IMR-90 (cell line): ENCODE measurements at regions of chr4 and their contacts with region 1.

Region 1: GRCh38 chr4:56372774-56373173 is 14.5 kb downstream of the AASDH start:
- DNase-seq: peak; percentile 57
- ATAC-seq: peak; percentile 53
- H3K4me3 ChIP-seq: no peak overlapping the region
- H3K27ac ChIP-seq: no peak overlapping the region
- H3K4me1 ChIP-seq: no peaks in the 10 kb centered on the region
- H3K27me3 ChIP-seq: no peaks in the 10 kb centered on the region
- CTCF ChIP-seq: no peak
- POLR2A ChIP-seq: no peak
- RAD21 ChIP-seq: no peak

Region 2: DNA sequence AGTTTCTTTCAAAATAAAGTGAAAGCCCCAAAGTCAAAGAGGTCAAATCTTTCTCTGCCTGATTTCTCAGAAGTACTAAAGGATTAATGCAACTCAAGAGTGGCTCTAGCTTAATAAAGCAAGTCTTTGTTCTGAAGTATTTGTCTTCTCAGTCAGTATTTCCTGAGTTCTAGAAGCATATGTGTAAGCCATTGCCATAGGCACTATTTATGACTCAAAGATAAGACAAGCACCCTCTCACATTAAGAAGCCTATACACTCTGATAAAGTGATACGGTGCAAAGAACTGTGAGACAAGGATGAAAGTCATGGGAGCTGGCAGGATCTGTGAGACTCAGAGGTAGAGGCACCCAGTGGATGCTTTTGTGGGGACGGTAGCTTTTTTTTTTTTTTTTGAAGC is 46.4 kb before region 1 on chr4:
- CTCF ChIA-PET with region 1: no interaction called
- POLR2A ChIA-PET with region 1: no interaction called
- dilution Hi-C with region 1: no loop called
- in situ Hi-C with region 1: no loop called
- intact Hi-C with region 1: loop called (anchors 5 kb)
- DNase-seq: peak; percentile 3
- ATAC-seq: no peak
- H3K4me3 ChIP-seq: no peak overlapping the region
- H3K27ac ChIP-seq: no peak overlapping the region
- H3K4me1 ChIP-seq: peaks cover 1% of the 10 kb centered on the region; the same call in 1 of the 2 replicates
- H3K27me3 ChIP-seq: no peaks in the 10 kb centered on the region
- CTCF ChIP-seq: no peak
- POLR2A ChIP-seq: no peak
- RAD21 ChIP-seq: no peak

Region 3: DNA sequence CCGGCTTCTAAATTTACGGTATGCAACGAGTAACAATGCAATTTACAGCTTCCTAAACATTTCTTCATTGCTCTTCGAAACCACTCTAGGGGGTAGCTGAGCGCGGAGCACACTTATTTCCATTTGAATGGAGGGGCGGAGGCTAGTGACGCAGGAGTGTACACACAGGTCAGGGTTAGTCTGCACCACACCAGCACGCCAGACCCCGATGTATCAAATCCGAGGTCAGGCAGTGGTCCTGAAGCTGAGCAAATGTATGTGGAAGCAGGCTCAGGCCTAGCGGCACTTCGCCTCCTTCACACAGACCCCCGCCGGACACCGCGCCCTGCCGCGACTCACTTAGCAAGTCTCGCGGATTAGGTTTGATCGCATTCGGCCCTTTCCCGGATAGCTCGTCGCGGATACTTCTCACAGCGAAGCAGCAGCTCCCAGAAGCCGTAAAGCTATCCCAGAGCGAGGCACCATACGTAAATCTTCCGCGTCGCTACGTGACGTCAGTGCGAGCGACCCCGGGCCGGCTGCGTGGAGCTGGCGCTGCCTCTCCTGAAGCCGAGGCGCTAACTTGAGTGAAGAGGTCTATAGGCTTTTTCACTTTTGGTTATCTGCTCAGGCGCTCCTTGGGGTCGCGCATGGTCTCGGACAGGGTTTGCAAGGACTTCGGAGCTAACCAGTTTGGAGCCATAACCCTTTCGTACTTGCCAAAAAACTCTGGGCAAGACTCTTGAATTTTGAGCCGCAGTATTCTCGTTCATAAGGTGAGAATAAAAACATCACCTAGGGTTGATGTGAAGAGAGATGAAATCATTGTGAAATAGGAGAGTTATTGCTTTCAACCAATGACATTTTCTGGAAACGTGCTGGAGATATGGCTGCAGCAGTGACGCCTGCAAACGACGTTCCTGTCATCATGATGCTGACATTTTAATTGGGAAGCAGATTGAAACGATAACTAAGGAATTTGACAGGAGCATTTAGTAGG is 14.5 kb after region 1 on chr4 and contains the start of gene AASDH:
- CTCF ChIA-PET with region 1: no interaction called
- POLR2A ChIA-PET with region 1: no interaction called
- dilution Hi-C with region 1: no loop called
- in situ Hi-C with region 1: no loop called
- intact Hi-C with region 1: no loop called
- DNase-seq: peak; percentile 95
- ATAC-seq: peak; percentile 93
- H3K4me3 ChIP-seq: peak within 1 kb of the TSS; percentile 61
- H3K27ac ChIP-seq: peak within 1 kb of the TSS; percentile 89
- H3K4me1 ChIP-seq: peaks cover 3% of the 10 kb centered on the region; the same call in 1 of the 2 replicates
- H3K27me3 ChIP-seq: no peaks in the 10 kb centered on the region
- CTCF ChIP-seq: no peak
- POLR2A ChIP-seq: peak; percentile 93
- RAD21 ChIP-seq: no peak
- total RNA-seq, gene AASDH: 12.0 and 13.1 TPM in 2 replicates